GM10248 (cell line): ENCODE measurements at regions of chr18 and their contacts with region 1.

Region 1: GRCh38 chr18:54119524-54120019 is 104.9 kb downstream of the MBD2 start:
- DNase-seq: peak; percentile 28
- CTCF ChIP-seq: peak; percentile 76

Region 2: GRCh38 chr18:53567929-53568574 is 551.5 kb before region 1 on chr18:
- CTCF ChIA-PET with region 1: interaction called, 15 read pairs
- POLR2A ChIA-PET with region 1: no interaction called
- DNase-seq: peak; percentile 41
- CTCF ChIP-seq: peak; percentile 58

Region 3: DNA sequence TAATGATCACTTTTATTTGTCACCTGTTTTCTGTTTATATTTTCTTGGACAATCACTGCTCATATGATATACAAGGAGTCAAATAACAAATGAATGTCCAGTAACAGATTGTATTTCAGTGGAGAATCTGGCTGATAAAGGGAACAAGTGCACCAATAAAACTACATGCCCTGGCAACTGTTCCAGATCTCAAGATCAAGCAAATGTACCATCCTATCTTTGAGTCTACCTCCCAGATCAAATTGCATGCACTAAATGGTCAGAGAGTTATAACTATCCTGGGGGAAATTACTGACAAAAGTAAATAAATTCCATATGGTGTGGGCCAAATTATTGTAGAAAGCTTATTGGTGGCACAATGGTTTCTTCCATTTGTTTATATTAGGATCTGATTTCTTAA is 347.9 kb before region 1 on chr18:
- CTCF ChIA-PET with region 1: no interaction called
- POLR2A ChIA-PET with region 1: no interaction called
- DNase-seq: no peak
- CTCF ChIP-seq: no peak

Region 4: GRCh38 chr18:53909668-53910067 is 209.9 kb before region 1 on chr18:
- CTCF ChIA-PET with region 1: interaction called, 19 read pairs
- POLR2A ChIA-PET with region 1: no interaction called
- DNase-seq: no peak
- CTCF ChIP-seq: peak; percentile 28

Region 5: DNA sequence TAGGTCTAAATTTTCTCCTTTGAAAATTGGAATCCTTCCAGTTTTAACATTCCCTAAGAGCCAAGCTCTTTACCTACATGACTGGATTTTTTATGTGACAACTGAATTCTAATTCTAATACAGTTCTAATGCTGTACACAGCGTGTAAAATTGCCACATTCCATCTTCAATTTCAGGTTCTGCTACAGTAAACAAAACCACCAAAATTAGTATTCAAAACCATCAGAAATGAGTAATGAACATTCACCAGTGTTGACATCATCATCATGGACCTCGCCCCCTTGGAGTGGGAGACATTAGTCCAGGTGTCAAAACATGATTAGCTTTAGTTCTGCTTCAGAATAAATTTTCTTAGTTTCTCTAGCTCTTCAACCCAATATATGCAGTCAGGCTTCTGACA is 28.7 kb before region 1 on chr18:
- CTCF ChIA-PET with region 1: interaction called, 15 read pairs
- POLR2A ChIA-PET with region 1: no interaction called
- DNase-seq: no peak
- CTCF ChIP-seq: no peak

Region 6: DNA sequence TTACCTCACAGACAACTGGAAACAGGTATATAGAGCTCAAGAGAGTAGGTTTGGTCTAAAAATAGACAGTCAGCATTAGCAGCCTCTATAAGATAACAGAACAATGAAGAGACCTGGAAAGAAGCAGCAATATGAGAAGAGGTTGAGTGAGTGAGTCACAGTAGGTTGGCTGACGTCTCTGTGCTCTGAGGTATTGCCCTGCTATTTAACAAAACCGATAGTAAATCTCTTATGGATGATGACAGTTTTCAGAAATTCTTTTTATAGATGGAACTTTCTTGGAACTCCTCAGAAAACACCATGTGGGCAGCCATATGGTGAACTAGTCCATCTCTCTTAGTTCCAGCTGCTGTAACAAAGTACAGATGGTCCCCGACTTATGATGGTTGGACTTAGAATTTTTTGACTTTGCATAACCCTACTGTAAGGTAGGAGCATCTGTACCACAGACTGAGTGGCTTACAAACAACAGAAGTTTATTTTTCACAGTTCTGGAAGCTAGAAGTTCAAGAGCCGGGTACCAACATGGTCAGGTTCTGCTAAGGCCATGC is 18.6 kb before region 1 on chr18:
- CTCF ChIA-PET with region 1: interaction called, 12 read pairs
- POLR2A ChIA-PET with region 1: no interaction called
- DNase-seq: no peak
- CTCF ChIP-seq: no peak

Region 7: DNA sequence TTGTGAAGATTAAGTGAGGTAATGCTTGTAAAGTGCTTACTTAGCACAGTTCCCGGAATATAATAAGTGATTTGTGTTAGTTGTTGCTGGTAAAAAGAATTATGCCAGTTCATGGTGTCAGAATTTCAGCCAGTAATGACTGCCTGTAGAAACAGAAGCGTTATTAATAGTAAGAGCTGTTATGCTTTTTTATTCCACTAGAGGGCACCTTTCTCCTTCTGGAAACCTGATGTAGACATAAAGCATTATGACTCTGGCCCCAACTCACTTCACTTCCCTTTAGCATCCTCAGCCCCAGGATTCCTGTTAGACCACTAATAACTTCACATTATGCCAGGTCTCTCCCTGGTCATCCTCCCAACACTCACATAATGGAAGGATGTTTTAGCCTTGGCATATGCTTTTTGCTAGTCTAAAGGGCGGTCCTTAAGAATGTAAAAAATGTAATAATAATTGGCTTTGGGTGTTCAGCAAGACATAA is 273.0 kb after region 1 on chr18:
- CTCF ChIA-PET with region 1: no interaction called
- POLR2A ChIA-PET with region 1: no interaction called
- DNase-seq: peak; percentile 45
- CTCF ChIP-seq: peak; percentile 70

Region 8: GRCh38 chr18:54405290-54405689 is 285.7 kb after region 1 on chr18:
- CTCF ChIA-PET with region 1: no interaction called
- POLR2A ChIA-PET with region 1: no interaction called
- DNase-seq: no peak
- CTCF ChIP-seq: no peak